Breast epithelium (tissue), 4 donors: ENCODE measurements at regions of chr22 and their contacts with region 1.

Region 1: GRCh38 chr22:44080936-44081861 is 57.1 kb downstream of the PARVB start:
- DNase-seq: peak; percentile 59 to 76
- H3K4me3 ChIP-seq: peak overlapping the region in 1 of 3 donors; percentile 0
- H3K27ac ChIP-seq: no peak overlapping the region
- H3K4me1 ChIP-seq: no peaks in the 10 kb centered on the region
- H3K27me3 ChIP-seq: no peaks in the 10 kb centered on the region
- CTCF ChIP-seq: peak; percentile 47 to 73 (median 56)
- POLR2A ChIP-seq: no peak

Region 2: GRCh38 chr22:43826142-43827002 is 254.8 kb before region 1 on chr22:
- intact Hi-C with region 1: no loop called
- DNase-seq: no peak
- H3K4me3 ChIP-seq: no peak overlapping the region
- H3K27ac ChIP-seq: no peak overlapping the region
- H3K4me1 ChIP-seq: no peaks in the 10 kb centered on the region
- H3K27me3 ChIP-seq: peaks cover 0 to 7% of the 10 kb centered on the region in 2 donors
- CTCF ChIP-seq: no peak
- POLR2A ChIP-seq: no peak

Region 3: DNA sequence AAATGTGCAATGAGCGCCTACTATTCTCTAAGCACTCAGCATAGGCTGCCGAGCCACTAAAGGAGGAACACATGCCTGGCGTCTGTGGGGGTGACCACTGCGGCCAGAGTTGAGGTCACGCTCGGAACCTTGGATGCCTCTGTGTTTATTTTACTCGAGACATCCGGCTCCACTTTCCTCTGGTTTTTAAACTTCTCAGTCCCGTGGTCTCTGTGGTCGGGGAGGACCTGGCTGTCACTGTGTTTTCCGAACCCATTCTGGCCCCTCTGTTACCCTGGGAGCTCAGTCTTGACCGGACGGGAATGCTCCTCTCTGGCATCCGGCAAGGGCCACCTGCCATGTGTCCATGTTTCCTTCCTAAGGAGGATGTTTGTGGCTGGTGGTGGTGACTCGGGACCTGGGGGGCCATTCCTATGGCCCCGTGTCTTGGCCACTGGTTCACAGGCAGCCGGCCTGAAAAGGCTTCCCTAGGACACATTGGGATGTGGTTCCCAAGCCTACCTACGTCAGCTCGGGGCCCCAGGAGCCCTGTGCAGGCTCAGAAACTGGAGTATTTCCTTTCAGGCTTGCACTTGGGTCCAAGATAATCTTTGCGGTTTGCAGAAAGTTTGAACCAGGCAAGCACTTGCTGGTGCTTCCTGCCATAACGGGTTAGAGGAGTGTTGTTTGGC is 52.8 kb after region 1 on chr22:
- intact Hi-C with region 1: no loop called
- DNase-seq: no peak
- H3K4me3 ChIP-seq: no peak overlapping the region
- H3K27ac ChIP-seq: no peak overlapping the region
- H3K4me1 ChIP-seq: no peaks in the 10 kb centered on the region
- H3K27me3 ChIP-seq: no peaks in the 10 kb centered on the region
- CTCF ChIP-seq: no peak
- POLR2A ChIP-seq: no peak

Region 4: GRCh38 chr22:44242946-44243724 is 161.9 kb after region 1 on chr22:
- intact Hi-C with region 1: loop called (anchors 10 kb)
- DNase-seq: no peak
- H3K4me3 ChIP-seq: no peak overlapping the region
- H3K27ac ChIP-seq: no peak overlapping the region
- H3K4me1 ChIP-seq: no peaks in the 10 kb centered on the region
- H3K27me3 ChIP-seq: peaks cover 0 to 18% of the 10 kb centered on the region in 2 donors
- CTCF ChIP-seq: no peak
- POLR2A ChIP-seq: no peak

Region 5: DNA sequence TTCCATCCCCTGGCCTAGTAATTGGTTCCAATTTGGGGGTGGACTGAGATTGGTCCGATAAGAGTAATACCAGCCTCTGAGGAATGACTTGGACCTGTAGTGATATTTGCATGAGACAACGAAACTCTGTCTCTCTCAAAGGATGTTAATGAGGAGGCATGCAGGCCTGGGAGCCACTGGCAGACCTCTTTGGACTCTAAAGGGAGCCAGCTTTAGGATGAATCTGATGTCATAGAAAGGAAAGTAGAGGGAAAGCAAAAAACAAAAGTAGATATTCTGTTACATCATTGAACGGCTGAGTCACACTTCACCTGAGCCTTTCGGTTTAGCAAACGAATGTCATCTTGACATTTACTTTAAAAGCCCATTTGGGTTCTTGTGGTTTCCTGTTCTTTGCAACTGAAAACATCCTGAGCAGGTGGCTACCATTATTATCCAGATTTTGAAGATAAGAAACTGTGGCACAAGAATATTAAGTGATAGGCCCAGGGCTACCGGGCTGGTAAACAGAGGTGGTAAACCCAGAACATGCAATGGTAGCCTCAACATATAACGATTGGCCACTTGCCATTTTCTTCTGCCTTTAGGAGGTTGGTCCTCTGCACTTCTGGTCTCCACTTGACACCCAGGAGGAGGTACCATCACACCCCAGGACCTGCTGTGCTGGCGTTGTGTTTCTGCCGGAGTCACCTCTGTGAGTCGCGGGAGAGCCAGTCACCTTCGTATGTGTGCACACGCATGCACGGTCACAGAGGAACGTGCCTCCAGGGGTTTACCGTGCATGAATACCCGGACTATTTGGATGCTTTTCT is 374.2 kb after region 1 on chr22:
- intact Hi-C with region 1: loop called (anchors 10 kb)
- DNase-seq: peak in 1 of 2 donors; percentile 24
- H3K4me3 ChIP-seq: no peak overlapping the region
- H3K27ac ChIP-seq: no peak overlapping the region
- H3K4me1 ChIP-seq: no peaks in the 10 kb centered on the region
- H3K27me3 ChIP-seq: no peaks in the 10 kb centered on the region
- CTCF ChIP-seq: no peak
- POLR2A ChIP-seq: no peak

Region 6: DNA sequence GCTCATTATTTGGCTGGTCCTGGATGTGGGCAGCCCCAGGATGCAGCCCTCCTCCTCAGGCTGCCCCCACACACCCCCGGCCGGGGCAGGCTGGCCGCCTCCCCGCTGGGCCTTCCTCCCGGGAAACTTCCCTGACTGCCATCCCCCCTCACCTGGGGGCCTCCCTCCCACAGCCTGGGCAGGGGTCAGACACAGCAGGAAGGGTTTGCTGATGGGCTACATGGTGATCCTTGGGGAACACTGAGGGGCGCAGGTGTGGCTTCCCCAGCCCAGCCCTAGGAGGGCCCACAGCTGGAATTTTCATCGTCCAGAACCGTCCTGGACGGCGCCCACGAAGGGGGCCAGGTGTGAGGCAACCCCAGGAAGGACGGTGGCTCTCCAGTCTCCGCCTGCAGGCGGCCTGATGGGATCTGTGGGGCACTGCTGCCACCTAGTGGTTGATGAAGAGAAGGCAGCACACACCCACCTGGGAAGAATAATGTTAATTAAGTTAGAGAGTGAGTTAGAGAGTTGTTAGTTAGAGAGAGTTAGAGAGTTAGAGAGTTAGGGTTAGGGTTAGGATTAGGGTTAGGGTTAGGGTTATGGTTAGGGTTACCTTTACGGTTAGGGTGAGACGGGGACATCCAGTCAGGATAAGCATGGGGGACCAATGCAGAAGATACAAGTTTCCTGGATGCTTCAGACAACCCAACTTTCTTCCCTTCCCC is 544.9 kb after region 1 on chr22:
- intact Hi-C with region 1: loop called (anchors 10 kb)
- DNase-seq: peak; percentile 42 to 74
- H3K4me3 ChIP-seq: no peak overlapping the region
- H3K27ac ChIP-seq: no peak overlapping the region
- H3K4me1 ChIP-seq: no peaks in the 10 kb centered on the region
- H3K27me3 ChIP-seq: peaks cover 0 to 38% of the 10 kb centered on the region in 2 donors
- CTCF ChIP-seq: peak; percentile 98 to 100 (median 99)
- POLR2A ChIP-seq: no peak